BJ (cell line): ENCODE measurements at regions of chr20 and their contacts with region 1.

Region 1: GRCh38 chr20:63980806-63981728 is at the start of gene PRPF6:
- DNase-seq: peak; percentile 60
- H3K4me3 ChIP-seq: peak within 1 kb of the TSS; percentile 97
- H3K27me3 ChIP-seq: no peaks in the 10 kb centered on the region
- CTCF ChIP-seq: peak; percentile 99
- polyA plus RNA-seq, gene PRPF6: 37.9 and 52.3 TPM in 2 replicates

Region 2: GRCh38 chr20:64062596-64063388 is 81.7 kb after region 1 on chr20 and contains the start of gene TCEA2:
- CTCF ChIA-PET with region 1: interaction called, 20 read pairs
- POLR2A ChIA-PET with region 1: no interaction called
- DNase-seq: peak; percentile 60
- H3K4me3 ChIP-seq: peak within 1 kb of the TSS; percentile 83
- H3K27me3 ChIP-seq: no peaks in the 10 kb centered on the region
- CTCF ChIP-seq: no peak
- polyA plus RNA-seq, gene TCEA2: 17.3 and 34.2 TPM in 2 replicates